ENCODE measurements at regions of chr1 and their contacts with region 1.

Region 1: GRCh38 chr1:29264773-29265389 is 28.6 kb downstream of the PTPRU start:
- DNase-seq: no peak
- ATAC-seq: no peak
- H3K4me3 ChIP-seq: no peak overlapping the region
- H3K27ac ChIP-seq: no peak overlapping the region
- H3K4me1 ChIP-seq: no peaks in the 10 kb centered on the region
- H3K27me3 ChIP-seq: peaks cover 2 to 5% of the 10 kb centered on the region in 2 experiments; a peak in 1 of 4 replicates
- CTCF ChIP-seq: no peak
- EP300 ChIP-seq: no peak
- POLR2A ChIP-seq: no peak
- RAD21 ChIP-seq: no peak

Region 2: DNA sequence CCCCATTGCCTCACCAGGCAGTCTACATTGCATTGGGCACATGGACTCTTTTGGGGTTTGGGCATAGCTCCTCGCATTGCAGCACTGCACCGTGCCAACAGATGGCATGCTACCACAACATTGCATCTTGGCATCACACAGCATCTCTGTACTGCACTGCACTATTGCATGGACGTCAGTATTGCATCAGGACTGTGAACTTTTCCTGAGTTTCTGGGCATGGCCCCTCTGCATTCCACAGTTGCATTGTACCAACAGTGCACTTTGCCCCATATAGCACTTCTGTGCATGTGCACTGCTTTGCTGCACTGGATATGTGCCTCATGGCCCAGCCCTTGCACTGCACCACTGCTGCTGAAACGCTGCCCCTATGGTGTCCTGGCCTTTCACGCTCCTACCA is 19.0 kb before region 1 on chr1:
- CTCF ChIA-PET with region 1: no interaction called
- POLR2A ChIA-PET with region 1: no interaction called
- RAD21 ChIA-PET with region 1: no interaction called
- SMC1A ChIA-PET with region 1: no interaction called
- in situ Hi-C with region 1: no loop called
- intact Hi-C with region 1: loop called (anchors 1 kb)
- DNase-seq: no peak
- ATAC-seq: peak; percentile 73
- H3K4me3 ChIP-seq: no peak overlapping the region
- H3K27ac ChIP-seq: no peak overlapping the region
- H3K4me1 ChIP-seq: no peaks in the 10 kb centered on the region
- H3K27me3 ChIP-seq: peaks cover 0 to 2% of the 10 kb centered on the region in 2 experiments; a peak in 1 of 4 replicates
- CTCF ChIP-seq: peak; percentile 31 to 48 (median 44); a peak in 3 of 6 replicates
- EP300 ChIP-seq: no peak
- POLR2A ChIP-seq: no peak
- RAD21 ChIP-seq: peak; percentile 31; the same call in 1 of the 2 replicates

Region 3: GRCh38 chr1:29356663-29357062 is 91.8 kb after region 1 on chr1:
- CTCF ChIA-PET with region 1: no interaction called
- POLR2A ChIA-PET with region 1: no interaction called
- RAD21 ChIA-PET with region 1: no interaction called
- SMC1A ChIA-PET with region 1: no interaction called
- in situ Hi-C with region 1: no loop called
- intact Hi-C with region 1: no loop called
- DNase-seq: no peak
- ATAC-seq: no peak
- H3K4me3 ChIP-seq: no peak overlapping the region
- H3K27ac ChIP-seq: no peak overlapping the region
- H3K4me1 ChIP-seq: no peaks in the 10 kb centered on the region
- H3K27me3 ChIP-seq: no peaks in the 10 kb centered on the region; a peak in 1 of 4 replicates
- CTCF ChIP-seq: no peak
- EP300 ChIP-seq: no peak
- POLR2A ChIP-seq: no peak
- RAD21 ChIP-seq: no peak

Measured in GM12878 (cell line).